SK-N-SH (cell line): ENCODE measurements at regions of chr1 and their contacts with region 1.

Region 1: DNA sequence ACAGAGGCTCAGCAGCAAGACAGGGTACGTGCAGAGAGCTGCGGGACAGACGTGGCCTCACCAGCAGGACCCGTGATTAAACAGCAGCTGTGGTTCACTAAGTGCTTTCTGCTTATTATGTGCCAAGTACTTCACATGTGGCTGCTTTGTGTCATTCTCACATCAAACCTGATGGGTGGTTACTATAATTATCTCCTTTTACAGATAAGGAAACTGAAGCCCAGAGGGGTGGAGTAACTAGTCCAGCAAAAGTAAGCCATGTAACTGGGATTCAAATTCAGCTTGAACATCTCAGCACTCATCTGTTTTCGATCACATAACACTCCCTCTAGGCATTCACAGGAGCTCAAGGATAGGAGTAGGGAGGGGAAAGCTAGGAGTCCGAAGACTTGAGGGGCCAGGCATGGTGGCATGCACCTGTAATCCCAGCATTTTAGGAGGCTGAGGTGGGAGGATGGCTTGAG is 50.8 kb upstream of the CLIC4 start:
- DNase-seq: peak; percentile 62
- H3K4me3 ChIP-seq: no peak overlapping the region
- H3K27ac ChIP-seq: peak overlapping the region in 1 of 2 experiments; percentile 51; a peak in 1 of 4 replicates
- H3K4me1 ChIP-seq: peaks cover 0 to 24% of the 10 kb centered on the region in 2 experiments; a peak in 1 of 4 replicates
- H3K27me3 ChIP-seq: no peaks in the 10 kb centered on the region
- CTCF ChIP-seq: no peak
- EP300 ChIP-seq: peak in 1 of 2 experiments; percentile 84; a peak in 2 of 4 replicates
- RAD21 ChIP-seq: no peak

Region 2: DNA sequence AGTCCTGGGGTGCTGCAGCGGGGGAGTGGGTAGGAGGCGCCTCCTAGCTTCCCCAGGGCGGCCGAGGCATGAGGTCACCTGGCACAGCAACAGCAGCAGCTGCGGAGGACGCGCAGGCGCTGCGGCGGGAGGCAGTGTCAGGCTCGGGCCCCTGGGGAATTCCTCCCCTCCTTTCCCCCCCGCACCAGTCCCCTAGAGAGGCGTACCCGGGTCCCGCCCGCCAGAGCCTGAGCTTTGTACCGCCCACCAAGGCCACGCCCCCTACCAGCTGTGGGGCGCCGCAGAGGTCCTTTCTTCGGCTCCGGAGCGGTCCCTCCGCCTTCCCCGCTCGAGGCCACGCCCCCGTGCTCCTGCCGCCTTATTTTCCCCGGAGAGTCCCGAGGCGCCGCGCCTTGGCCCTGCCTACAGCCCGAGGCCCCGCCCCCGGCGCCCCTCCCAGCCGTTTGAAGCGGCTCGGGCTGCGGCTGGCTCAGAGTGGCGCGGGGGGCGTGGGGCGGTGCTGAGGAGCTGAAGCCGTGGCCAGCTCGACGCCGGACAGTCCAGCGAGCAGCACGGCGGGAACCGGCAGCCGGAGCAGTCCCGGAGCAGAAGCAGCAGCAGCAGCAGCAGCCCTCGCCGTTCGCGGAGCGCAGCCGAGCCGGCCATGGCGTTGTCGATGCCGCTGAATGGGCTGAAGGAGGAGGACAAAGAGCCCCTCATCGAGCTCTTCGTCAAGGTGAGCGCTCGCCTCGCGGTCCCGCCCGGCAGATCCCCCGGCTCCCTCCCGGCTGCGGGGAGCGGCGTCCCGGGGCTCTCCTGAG is 50.7 kb after region 1 on chr1 and contains the start of gene CLIC4:
- CTCF ChIA-PET with region 1: interaction called, 8 read pairs
- POLR2A ChIA-PET with region 1: interaction called, 14 read pairs
- DNase-seq: peak; percentile 97
- H3K4me3 ChIP-seq: peak within 1 kb of the TSS; percentile 70 to 88
- H3K27ac ChIP-seq: peak within 1 kb of the TSS; percentile 79 to 85
- H3K4me1 ChIP-seq: peaks cover 10 to 21% of the 10 kb centered on the region in 2 experiments; a peak in 2 of 4 replicates
- H3K27me3 ChIP-seq: no peaks in the 10 kb centered on the region
- CTCF ChIP-seq: no peak
- EP300 ChIP-seq: peak in 1 of 2 experiments; percentile 72; a peak in 1 of 4 replicates
- RAD21 ChIP-seq: peak; percentile 39
- polyA plus RNA-seq, gene CLIC4: 66.4 and 84.4 TPM in 2 replicates